K562 (cell line): ENCODE measurements at regions of chr3 and their contacts with region 1.

Region 1: DNA sequence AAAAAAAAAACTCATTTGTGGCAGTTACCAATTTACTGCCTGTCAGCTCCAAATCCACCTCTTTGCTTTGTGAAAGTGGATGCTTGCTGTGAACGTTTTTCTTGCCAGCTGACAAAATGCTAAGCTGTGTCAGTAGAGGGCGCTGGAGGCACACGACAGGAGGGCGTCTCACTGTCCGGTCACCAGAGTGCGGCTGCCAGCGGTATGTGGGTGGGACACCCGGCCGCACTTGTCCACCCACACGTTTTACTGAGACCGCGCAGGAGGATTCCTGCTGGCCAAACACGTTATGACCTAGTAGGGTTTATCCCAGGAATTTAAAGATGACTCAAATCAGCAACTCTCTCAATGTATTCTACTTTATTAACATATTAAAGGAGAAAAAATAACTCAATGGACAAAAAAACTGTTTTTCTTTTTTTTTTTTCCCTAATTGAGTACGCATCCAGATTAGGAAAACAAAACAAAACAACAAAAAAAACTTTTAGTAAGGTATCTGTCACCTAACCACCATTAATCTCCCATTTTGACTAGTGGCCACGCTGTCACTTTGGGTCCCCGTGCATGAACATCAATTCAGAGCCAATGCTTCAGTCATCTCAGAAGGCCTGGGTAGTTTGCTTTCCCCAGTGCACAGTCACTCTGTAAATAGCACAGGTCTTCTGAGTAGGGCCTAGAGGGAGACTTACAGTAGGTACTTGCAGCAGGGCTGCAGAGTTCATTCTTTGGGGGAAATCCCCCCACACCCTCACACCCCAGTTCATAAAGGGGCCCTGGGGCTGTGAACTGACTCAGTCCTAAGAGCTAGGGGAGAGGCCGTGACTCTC is 43.8 kb upstream of the RPL35A start:
- DNase-seq: peak; percentile 88 to 96 (median 95)
- ATAC-seq: peak; percentile 100
- H3K4me3 ChIP-seq: no peak overlapping the region
- H3K27ac ChIP-seq: no peak overlapping the region
- H3K4me1 ChIP-seq: peaks cover 0 to 6% of the 10 kb centered on the region in 2 experiments; a peak in 2 of 5 replicates
- H3K27me3 ChIP-seq: no peaks in the 10 kb centered on the region
- CTCF ChIP-seq: peak; percentile 96 to 98 (median 96)
- EP300 ChIP-seq: no peak
- POLR2A ChIP-seq: no peak
- RAD21 ChIP-seq: peak; percentile 93 to 95

Region 2: GRCh38 chr3:198051836-198052235 is 145.6 kb after region 1 on chr3:
- CTCF ChIA-PET with region 1: no interaction called
- POLR2A ChIA-PET with region 1: no interaction called
- in situ Hi-C with region 1: no loop called
- intact Hi-C with region 1: loop called (anchors 5 kb)
- DNase-seq: no peak
- ATAC-seq: no peak
- H3K4me3 ChIP-seq: no peak overlapping the region
- H3K27ac ChIP-seq: no peak overlapping the region
- H3K4me1 ChIP-seq: peaks cover 0 to 6% of the 10 kb centered on the region in 2 experiments; a peak in 3 of 5 replicates
- H3K27me3 ChIP-seq: no peaks in the 10 kb centered on the region
- CTCF ChIP-seq: no peak
- EP300 ChIP-seq: no peak
- POLR2A ChIP-seq: no peak
- RAD21 ChIP-seq: no peak

Region 3: DNA sequence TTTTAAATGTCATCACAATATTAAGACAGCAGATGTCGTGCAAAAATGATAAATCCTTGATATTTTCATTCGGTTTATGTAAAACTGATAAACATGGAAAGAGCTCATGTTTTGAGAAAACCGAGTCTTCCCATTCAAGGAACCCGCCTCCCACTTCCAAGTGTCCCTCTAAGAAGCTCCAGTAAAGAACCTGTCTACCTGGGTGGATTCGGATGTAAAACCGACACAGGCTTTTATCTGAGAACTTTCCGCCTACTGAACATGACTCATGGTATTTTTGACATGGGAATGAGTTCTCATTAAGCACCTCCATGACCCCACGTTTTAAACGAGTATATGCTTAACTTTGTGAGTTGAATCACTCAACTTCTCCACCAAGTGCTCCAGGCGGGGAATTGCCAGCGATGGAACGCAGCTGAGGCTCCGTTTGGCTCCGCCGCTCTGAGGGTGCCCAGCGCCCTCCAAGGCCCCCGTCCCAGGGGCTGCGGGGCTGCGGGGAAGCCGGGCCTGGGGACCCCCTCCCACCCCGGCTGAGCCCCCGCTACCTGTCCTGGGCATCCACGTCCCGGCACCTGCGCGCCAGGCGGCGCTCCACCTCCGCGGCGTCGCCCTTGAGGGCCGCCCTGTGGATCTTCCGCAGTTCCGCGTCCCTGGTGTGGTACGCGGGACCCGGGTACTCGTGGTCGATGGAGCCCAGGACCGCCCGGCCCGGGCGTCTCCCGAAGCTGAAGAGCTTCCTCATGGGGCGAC is 173.7 kb after region 1 on chr3:
- CTCF ChIA-PET with region 1: interaction called, 5 read pairs
- POLR2A ChIA-PET with region 1: interaction called, 3 read pairs
- in situ Hi-C with region 1: no loop called
- intact Hi-C with region 1: loop called (anchors 5 kb)
- DNase-seq: peak; percentile 18 to 78 (median 28)
- ATAC-seq: peak; percentile 84
- H3K4me3 ChIP-seq: peak overlapping the region; percentile 72
- H3K27ac ChIP-seq: peak overlapping the region; percentile 93
- H3K4me1 ChIP-seq: peaks cover 9 to 19% of the 10 kb centered on the region in 2 experiments
- H3K27me3 ChIP-seq: no peaks in the 10 kb centered on the region
- CTCF ChIP-seq: peak; percentile 17 to 76 (median 35); a peak in 3 of 6 replicates
- EP300 ChIP-seq: peak; percentile 40; the same call in 1 of the 2 replicates
- POLR2A ChIP-seq: no peak
- RAD21 ChIP-seq: no peak